ENCODE measurements at regions of chr5 and their contacts with region 1.

Region 1: GRCh38 chr5:188488-189481 is 2.5 kb upstream of the LRRC14B start:
- H3K4me3 ChIP-seq: no peak overlapping the region
- H3K27ac ChIP-seq: no peak overlapping the region; the same call in 1 of the 2 replicates
- H3K4me1 ChIP-seq: peaks cover 4% of the 10 kb centered on the region
- CTCF ChIP-seq: peak; percentile 91

Region 2: GRCh38 chr5:11898-12297 is 176.9 kb before region 1 on chr5:
- CTCF ChIA-PET with region 1: no interaction called
- POLR2A ChIA-PET with region 1: no interaction called
- H3K4me3 ChIP-seq: no peak overlapping the region
- H3K27ac ChIP-seq: no peak overlapping the region
- H3K4me1 ChIP-seq: no peaks in the 10 kb centered on the region
- CTCF ChIP-seq: no peak

Region 3: GRCh38 chr5:217860-218456 is 29.2 kb after region 1 on chr5 and contains the starts of genes CCDC127 and SDHA:
- CTCF ChIA-PET with region 1: interaction called, 13 read pairs
- POLR2A ChIA-PET with region 1: interaction called, 18 read pairs
- H3K4me3 ChIP-seq: peak within 1 kb of the TSS; percentile 99
- H3K27ac ChIP-seq: peak within 1 kb of the TSS; percentile 77; the same call in 1 of the 2 replicates
- H3K4me1 ChIP-seq: peaks cover 4% of the 10 kb centered on the region
- CTCF ChIP-seq: peak; percentile 76

Region 4: DNA sequence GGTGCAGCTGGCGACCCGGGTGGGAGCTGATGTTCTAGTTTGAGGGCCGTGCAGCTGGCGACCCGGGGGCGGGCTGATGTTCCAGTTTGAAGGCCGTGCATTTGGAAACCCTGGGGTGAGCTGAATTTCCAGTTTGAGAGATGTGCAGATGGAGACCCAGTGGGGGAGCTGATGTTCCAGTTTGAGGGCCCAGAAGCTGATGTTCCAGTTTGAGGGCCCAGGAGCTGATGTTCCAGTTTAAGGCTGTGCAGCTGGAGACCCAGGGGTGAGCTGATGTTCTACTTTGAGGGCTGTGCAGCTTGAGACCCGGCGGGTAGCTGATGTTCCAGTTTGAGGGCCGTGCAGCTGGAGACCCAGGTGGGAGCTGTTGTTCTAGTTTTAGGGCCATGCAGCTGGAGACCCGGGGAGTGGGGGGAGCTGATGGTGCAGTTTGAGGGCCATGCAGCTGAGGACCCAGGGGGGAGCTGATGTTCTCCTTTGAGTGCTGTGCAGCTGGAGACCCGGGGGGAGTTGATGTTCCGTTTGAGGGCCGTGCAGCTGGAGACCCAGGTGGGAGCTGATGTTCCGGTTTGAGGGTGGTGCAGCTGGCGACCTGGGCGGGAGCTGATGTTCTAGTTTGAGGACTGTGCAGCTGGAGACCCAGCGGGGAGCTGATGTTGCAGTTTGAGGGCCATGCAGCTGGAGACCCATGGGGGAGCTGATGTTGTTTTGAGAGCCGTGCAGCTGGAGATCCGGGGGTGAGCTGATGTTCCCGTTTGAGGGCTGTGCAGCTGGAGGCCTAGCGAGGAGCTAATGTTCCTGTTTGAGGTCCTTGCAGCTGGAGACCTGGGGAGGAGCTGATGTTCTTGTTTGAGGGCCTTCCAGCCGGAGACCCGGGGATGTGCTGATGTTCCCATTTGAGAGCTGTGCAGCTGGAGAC is 97.1 kb after region 1 on chr5:
- CTCF ChIA-PET with region 1: no interaction called
- POLR2A ChIA-PET with region 1: no interaction called
- H3K4me3 ChIP-seq: no peak overlapping the region
- H3K27ac ChIP-seq: no peak overlapping the region
- H3K4me1 ChIP-seq: no peaks in the 10 kb centered on the region
- CTCF ChIP-seq: no peak